Panc1 (cell line): ENCODE measurements at regions of chr3 and their contacts with region 1.

Region 1: GRCh38 chr3:41900265-41900664 is 61.6 kb downstream of the ULK4 start:
- DNase-seq: no peak
- ATAC-seq: no peak
- H3K4me3 ChIP-seq: no peak overlapping the region
- H3K27ac ChIP-seq: no peak overlapping the region
- H3K4me1 ChIP-seq: no peaks in the 10 kb centered on the region
- H3K27me3 ChIP-seq: no peaks in the 10 kb centered on the region
- CTCF ChIP-seq: no peak

Region 2: GRCh38 chr3:41872157-41872556 is 28.1 kb before region 1 on chr3:
- CTCF ChIA-PET with region 1: no interaction called
- POLR2A ChIA-PET with region 1: interaction called, 19 read pairs
- in situ Hi-C with region 1: no loop called
- intact Hi-C with region 1: no loop called
- DNase-seq: no peak
- ATAC-seq: no peak
- H3K4me3 ChIP-seq: no peak overlapping the region
- H3K27ac ChIP-seq: no peak overlapping the region
- H3K4me1 ChIP-seq: no peaks in the 10 kb centered on the region
- H3K27me3 ChIP-seq: no peaks in the 10 kb centered on the region
- CTCF ChIP-seq: no peak